Right cardiac atrium (tissue), 5 donors: ENCODE measurements at regions of chr9 and their contacts with region 1.

Region 1: DNA sequence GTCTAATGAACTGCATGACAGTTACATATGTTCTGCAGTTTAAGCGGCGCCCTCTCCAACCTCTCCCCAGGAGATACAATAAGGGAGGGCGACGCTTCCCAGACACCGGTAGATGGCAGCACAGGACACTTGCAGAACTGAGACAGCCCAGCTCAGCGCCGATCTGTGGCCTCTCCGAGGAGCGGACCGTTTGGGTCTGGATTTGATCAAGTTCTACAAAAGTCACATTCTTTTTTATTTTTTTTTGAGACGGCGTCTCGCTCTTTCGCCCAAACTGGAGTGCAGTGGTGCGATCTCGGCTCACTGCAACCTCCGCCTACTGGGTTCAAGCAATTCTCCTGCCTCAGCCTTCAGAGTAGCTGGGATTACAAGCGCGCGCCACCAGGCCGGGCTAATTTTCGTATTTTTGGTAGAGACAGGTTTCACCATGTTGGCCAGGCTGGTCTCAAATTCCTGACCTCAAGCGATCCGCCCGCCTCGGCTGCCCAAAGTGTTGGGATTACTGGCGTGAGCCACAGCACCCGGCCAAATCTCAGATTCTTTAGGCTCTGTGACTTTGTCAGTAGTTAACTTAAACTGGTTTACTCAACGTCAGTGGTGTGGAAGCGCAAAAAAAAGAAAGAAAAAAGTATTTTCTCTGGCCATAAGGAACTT is 1.4 kb upstream of the ATOSB start:
- DNase-seq: peak; percentile 92 to 95 (median 94)
- ATAC-seq: peak; percentile 75 to 81
- H3K4me3 ChIP-seq: peak overlapping the region; percentile 58
- H3K27ac ChIP-seq: no peak overlapping the region
- H3K4me1 ChIP-seq: peaks cover 4% of the 10 kb centered on the region
- H3K27me3 ChIP-seq: no peaks in the 10 kb centered on the region

Region 2: GRCh38 chr9:35258676-35259474 is 141.8 kb after region 1 on chr9:
- intact Hi-C with region 1: loop called (anchors 2 to 5 kb)
- DNase-seq: peak; percentile 78 to 89 (median 87)
- ATAC-seq: peak; percentile 75 to 77
- H3K4me3 ChIP-seq: no peak overlapping the region
- H3K27ac ChIP-seq: no peak overlapping the region
- H3K4me1 ChIP-seq: no peaks in the 10 kb centered on the region
- H3K27me3 ChIP-seq: no peaks in the 10 kb centered on the region

Region 3: GRCh38 chr9:35553670-35554543 is 436.9 kb after region 1 on chr9:
- intact Hi-C with region 1: loop called in 1 of 4 experiments (anchors 10 kb)
- DNase-seq: peak; percentile 75 to 88 (median 83)
- ATAC-seq: peak; percentile 86 to 89
- H3K4me3 ChIP-seq: no peak overlapping the region
- H3K27ac ChIP-seq: no peak overlapping the region
- H3K4me1 ChIP-seq: peaks cover 2% of the 10 kb centered on the region
- H3K27me3 ChIP-seq: no peaks in the 10 kb centered on the region